ENCODE measurements at regions of chr21 and their contacts with region 1.

Region 1: DNA sequence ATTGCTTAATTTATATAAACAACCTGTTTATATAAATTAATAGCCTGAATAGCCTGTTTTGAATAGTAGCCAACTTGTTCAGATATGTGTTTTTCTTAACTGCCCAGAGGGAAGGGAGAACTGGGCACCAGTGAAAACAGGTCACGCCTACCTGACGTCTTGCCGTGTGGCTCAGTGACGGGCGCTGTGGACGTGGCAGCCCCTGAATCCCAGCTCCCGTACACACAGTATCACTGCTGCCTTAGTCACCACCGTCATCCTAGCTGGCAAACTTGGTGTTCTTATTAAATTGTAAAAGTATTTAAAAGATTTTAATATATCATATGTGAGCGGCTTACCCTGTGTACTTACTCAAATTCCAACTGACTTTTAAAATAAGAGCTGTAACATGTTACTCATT is 35.4 kb upstream of the TRAPPC10 start:
- DNase-seq: peak; percentile 53 to 56
- H3K4me3 ChIP-seq: no peak overlapping the region
- H3K27ac ChIP-seq: peak overlapping the region in 1 of 3 donors; percentile 13
- H3K4me1 ChIP-seq: peaks cover 0 to 4% of the 10 kb centered on the region in 2 donors
- H3K27me3 ChIP-seq: no peaks in the 10 kb centered on the region
- CTCF ChIP-seq: no peak
- POLR2A ChIP-seq: no peak

Region 2: GRCh38 chr21:43810505-43811261 is 166.0 kb before region 1 on chr21:
- intact Hi-C with region 1: loop called (anchors 2 kb)
- DNase-seq: peak; percentile 84 to 88
- H3K4me3 ChIP-seq: no peak overlapping the region
- H3K27ac ChIP-seq: no peak overlapping the region
- H3K4me1 ChIP-seq: peaks cover 15 to 29% of the 10 kb centered on the region in 2 donors
- H3K27me3 ChIP-seq: no peaks in the 10 kb centered on the region
- CTCF ChIP-seq: peak; percentile 87 to 98 (median 96)
- POLR2A ChIP-seq: no peak